Activated naive CD4-positive, alpha-beta T cell treated with anti-CD3 and anti-CD28 coated beads for 36 hours (primary cell): ENCODE measurements at regions of chr15 and their contacts with region 1.

Region 1: GRCh38 chr15:98779463-98780071 is 131.2 kb downstream of the IGF1R start:
- DNase-seq: peak; percentile 86
- H3K4me3 Mint-ChIP-seq: peak overlapping the region; percentile 51
- H3K27ac Mint-ChIP-seq: no peak overlapping the region
- H3K4me1 Mint-ChIP-seq: peaks cover 49% of the 10 kb centered on the region
- H3K27me3 Mint-ChIP-seq: no peaks in the 10 kb centered on the region

Region 2: GRCh38 chr15:98596885-98597391 is 182.6 kb before region 1 on chr15:
- CTCF ChIA-PET with region 1: no interaction called
- intact Hi-C with region 1: no loop called
- DNase-seq: no peak
- H3K4me3 Mint-ChIP-seq: no peak overlapping the region
- H3K27ac Mint-ChIP-seq: no peak overlapping the region
- H3K4me1 Mint-ChIP-seq: peaks cover 20% of the 10 kb centered on the region
- H3K27me3 Mint-ChIP-seq: no peaks in the 10 kb centered on the region

Region 3: GRCh38 chr15:98845107-98845884 is 65.7 kb after region 1 on chr15:
- CTCF ChIA-PET with region 1: interaction called, 16 read pairs
- intact Hi-C with region 1: no loop called
- DNase-seq: no peak
- H3K4me3 Mint-ChIP-seq: no peak overlapping the region
- H3K27ac Mint-ChIP-seq: peak overlapping the region; percentile 63
- H3K4me1 Mint-ChIP-seq: peaks cover 48% of the 10 kb centered on the region
- H3K27me3 Mint-ChIP-seq: no peaks in the 10 kb centered on the region

Region 4: GRCh38 chr15:98881526-98882520 is 102.3 kb after region 1 on chr15:
- CTCF ChIA-PET with region 1: interaction called, 46 read pairs
- intact Hi-C with region 1: loop called (anchors 1 kb)
- DNase-seq: peak; percentile 23
- H3K4me3 Mint-ChIP-seq: no peak overlapping the region
- H3K27ac Mint-ChIP-seq: peak overlapping the region; percentile 25
- H3K4me1 Mint-ChIP-seq: peaks cover 14% of the 10 kb centered on the region
- H3K27me3 Mint-ChIP-seq: no peaks in the 10 kb centered on the region

Region 5: DNA sequence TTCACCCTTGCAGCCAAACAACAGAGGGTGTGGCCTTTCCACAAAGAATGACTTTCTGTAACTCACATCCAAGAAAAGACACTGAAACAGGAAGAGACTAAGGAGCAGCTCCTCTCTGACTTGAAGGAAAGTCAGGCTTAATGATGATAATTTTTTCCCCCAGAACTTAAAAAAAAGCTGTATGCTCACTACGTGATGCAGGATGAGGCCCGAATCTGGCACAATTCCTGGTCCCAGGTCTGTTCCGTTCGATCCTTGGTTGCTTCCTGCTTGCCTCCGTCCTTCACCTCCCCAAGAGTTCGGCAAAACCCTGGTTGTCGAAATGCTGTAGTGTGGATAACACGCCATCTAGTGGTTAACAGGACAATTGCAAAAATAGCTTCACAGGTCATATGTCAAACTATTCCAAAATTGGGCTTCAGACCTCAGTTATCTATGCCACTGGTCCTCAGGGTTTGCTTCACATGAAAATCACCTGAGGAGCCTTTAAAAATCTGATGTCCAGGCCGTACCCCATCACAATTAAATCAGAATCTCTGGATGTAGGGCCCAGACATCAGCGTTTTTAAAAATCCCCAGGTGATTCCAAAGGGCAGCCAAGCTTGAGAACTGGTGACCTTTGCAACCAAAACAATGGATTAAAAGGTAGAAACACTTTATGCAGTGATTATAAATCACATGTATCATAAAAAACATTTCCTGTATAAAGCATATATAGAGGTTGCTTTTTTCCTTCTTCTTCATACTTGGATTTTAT is 297.2 kb after region 1 on chr15:
- CTCF ChIA-PET with region 1: interaction called, 9 read pairs
- intact Hi-C with region 1: loop called (anchors 5 kb)
- DNase-seq: peak; percentile 61
- H3K4me3 Mint-ChIP-seq: peak overlapping the region; percentile 72
- H3K27ac Mint-ChIP-seq: no peak overlapping the region
- H3K4me1 Mint-ChIP-seq: peaks cover 7% of the 10 kb centered on the region
- H3K27me3 Mint-ChIP-seq: peaks cover 9% of the 10 kb centered on the region